Activated CD4-positive, alpha-beta T cell treated with anti-CD3 and anti-CD28 coated beads, Interleukin-2, amount 10 ng/mL, durations not matched to agents 7 days and 5 days (primary cell): ENCODE measurements at regions of chr7 and their contacts with region 1.

Region 1: DNA sequence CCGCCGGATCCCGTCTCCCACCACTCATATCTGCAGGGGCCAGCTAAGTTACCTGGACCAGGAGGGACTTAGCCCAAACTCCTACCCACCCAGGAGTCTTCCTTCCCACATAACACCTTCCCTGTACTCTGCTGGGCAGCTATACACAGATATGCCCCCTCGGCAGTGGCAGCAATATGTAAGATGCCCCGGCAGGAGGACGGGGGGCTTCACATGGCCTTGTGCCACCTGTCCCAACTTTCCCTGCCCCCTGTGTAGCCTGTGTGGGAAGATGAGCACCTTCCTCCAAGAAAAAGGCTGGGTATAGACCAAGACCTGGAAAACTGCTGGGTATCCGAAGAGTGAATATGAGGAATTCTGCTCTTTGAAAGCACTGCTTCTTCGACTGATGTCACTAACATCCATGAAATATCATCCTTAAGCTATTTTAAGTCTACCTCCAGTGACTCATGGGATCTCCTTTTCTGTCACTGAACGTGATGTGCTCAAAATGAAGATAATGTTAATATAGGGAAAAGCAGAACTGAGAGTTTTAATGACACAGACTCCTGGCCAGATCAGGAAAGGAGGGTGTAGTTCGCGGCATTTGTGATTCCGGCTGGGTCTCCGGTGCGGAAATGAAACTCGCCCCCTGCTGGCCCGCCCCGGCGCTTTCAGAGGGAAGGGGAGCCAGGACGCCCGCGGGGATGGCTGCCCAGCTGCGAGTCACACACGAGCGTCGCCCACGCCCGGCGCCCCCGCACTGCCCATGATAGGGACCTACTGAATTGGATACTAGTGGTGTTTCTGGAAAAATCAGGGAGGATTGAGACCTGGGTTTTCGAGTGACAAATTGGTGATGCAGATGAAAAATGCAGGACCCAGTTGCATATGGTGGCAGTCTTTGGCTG is 256.9 kb upstream of the NFE2L3 start:
- DNase-seq: peak; percentile 59
- H3K4me3 Mint-ChIP-seq: peak overlapping the region; percentile 22
- H3K27ac Mint-ChIP-seq: peak overlapping the region; percentile 22
- H3K4me1 Mint-ChIP-seq: peaks cover 31% of the 10 kb centered on the region
- H3K27me3 Mint-ChIP-seq: peaks cover 17% of the 10 kb centered on the region

Region 2: GRCh38 chr7:25726170-25726780 is 168.9 kb before region 1 on chr7:
- CTCF ChIA-PET with region 1: no interaction called
- POLR2A ChIA-PET with region 1: no interaction called
- DNase-seq: no peak
- H3K4me3 Mint-ChIP-seq: no peak overlapping the region
- H3K27ac Mint-ChIP-seq: no peak overlapping the region
- H3K4me1 Mint-ChIP-seq: no peaks in the 10 kb centered on the region
- H3K27me3 Mint-ChIP-seq: peaks cover 4% of the 10 kb centered on the region

Region 3: DNA sequence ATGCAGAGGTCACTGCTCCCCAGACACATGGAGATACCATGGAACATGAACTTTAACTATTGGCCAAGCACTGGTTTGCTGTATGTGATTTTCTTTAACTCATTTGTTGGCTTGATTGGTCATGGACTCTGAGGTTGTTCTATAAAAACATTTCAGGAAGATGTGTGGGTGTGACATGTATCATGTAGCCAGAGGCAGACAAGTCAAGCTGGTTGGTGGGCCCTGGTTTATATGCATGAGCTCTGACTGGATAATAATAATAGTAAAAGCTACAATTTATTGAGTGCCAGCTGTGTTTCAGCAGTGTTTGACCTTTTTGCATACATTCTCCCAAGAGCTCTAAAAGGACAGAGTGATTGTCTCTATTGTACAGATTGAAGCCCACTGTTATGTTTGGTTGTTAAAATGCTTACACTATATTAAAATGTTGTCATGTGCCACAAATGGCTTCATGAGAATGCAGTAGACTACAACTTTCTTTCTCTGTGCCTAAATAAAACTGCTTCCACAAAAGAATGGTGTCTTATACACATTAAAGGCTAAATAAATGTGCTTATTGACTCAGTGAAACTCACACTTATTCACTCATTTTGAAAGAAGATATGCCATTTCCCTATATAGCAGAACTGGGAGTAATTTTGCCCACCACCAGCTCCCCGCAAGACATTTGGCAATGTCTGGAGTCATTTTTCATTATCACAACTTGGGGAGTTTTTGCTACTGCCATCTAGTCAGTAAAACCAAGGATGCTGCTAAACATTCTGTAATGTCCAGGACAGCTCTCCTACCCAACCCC is 13.2 kb after region 1 on chr7:
- CTCF ChIA-PET with region 1: interaction called, 36 read pairs
- POLR2A ChIA-PET with region 1: no interaction called
- DNase-seq: no peak
- H3K4me3 Mint-ChIP-seq: no peak overlapping the region
- H3K27ac Mint-ChIP-seq: no peak overlapping the region
- H3K4me1 Mint-ChIP-seq: no peaks in the 10 kb centered on the region
- H3K27me3 Mint-ChIP-seq: peaks cover 6% of the 10 kb centered on the region